ENCODE measurements at regions of chr19 and their contacts with region 1.

Region 1: GRCh38 chr19:47186446-47187334 is 44.3 kb downstream of the BBC3 start:
- DNase-seq: peak; percentile 61 to 89 (median 81)
- ATAC-seq: peak; percentile 81 to 90 (median 86)
- H3K4me3 ChIP-seq: peak overlapping the region; percentile 8 to 18
- H3K4me3 Mint-ChIP-seq: peak overlapping the region; percentile 62 to 73 (median 72)
- H3K27ac ChIP-seq: peak overlapping the region; percentile 82
- H3K27ac Mint-ChIP-seq: peak overlapping the region; percentile 97 to 98
- H3K4me1 ChIP-seq: peaks cover 78 to 92% of the 10 kb centered on the region in 2 experiments
- H3K4me1 Mint-ChIP-seq: peaks cover 87 to 89% (median 88%) of the 10 kb centered on the region in 3 donors
- H3K27me3 ChIP-seq: no peaks in the 10 kb centered on the region
- H3K27me3 Mint-ChIP-seq: no peaks in the 10 kb centered on the region

Region 2: GRCh38 chr19:47124937-47125668 is 61.6 kb before region 1 on chr19:
- CTCF ChIA-PET with region 1: no interaction called
- POLR2A ChIA-PET with region 1: no interaction called
- DNase-seq: peak in 7 of 35 experiments; percentile 7 to 82 (median 23)
- ATAC-seq: peak; percentile 50 to 71 (median 63)
- H3K4me3 ChIP-seq: no peak overlapping the region
- H3K4me3 Mint-ChIP-seq: no peak overlapping the region
- H3K27ac ChIP-seq: no peak overlapping the region
- H3K27ac Mint-ChIP-seq: peak overlapping the region in 1 of 2 donors; percentile 29
- H3K4me1 ChIP-seq: peaks cover 0 to 3% of the 10 kb centered on the region in 2 experiments
- H3K4me1 Mint-ChIP-seq: peaks cover under 1 to 8% (median 6%) of the 10 kb centered on the region in 3 donors
- H3K27me3 ChIP-seq: no peaks in the 10 kb centered on the region
- H3K27me3 Mint-ChIP-seq: peaks cover 0 to 2% of the 10 kb centered on the region in 2 donors

Region 3: DNA sequence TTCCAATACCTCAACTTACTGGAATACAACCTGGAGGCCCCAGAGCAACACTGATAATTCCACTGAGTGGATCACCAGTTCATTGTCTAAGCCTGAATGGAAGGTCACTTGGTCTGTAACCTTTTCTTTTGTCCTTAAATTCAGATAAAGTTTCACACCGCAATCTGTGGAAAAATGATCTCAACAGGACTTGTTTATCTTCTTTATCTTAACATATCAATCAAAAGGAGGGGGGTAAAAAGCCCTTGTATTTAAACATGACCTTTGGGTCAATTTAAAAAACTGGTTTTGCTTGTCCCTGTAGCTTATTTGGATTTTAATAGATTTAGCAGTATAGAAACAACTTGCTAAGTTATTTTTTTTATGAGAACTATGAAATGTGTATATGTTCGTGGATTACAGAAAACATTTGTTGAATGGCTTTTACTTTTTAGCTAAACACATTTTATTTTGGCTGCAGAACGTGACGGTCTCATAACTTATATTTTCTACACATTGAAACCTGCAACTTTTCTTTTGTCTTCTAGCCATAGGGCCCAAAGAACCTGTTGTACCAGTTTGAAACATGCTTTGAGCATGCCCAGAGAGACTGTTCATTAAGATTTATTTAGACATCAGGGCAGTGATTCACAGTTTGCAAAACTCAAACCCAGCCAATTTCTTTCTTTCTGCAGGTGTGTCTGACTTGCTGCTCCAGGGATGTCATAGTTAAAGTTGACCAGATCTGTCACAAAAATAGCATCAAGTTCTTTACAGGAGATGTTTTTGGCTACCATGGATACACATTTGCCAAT is 34.3 kb before region 1 on chr19:
- CTCF ChIA-PET with region 1: interaction called, 5 to 32 read pairs
- POLR2A ChIA-PET with region 1: interaction called in 1 of 2 experiments, 7 read pairs
- DNase-seq: no peak
- ATAC-seq: no peak
- H3K4me3 ChIP-seq: no peak overlapping the region
- H3K4me3 Mint-ChIP-seq: no peak overlapping the region
- H3K27ac ChIP-seq: no peak overlapping the region
- H3K27ac Mint-ChIP-seq: peak overlapping the region in 1 of 2 donors; percentile 32
- H3K4me1 ChIP-seq: peaks cover 34 to 53% of the 10 kb centered on the region in 2 experiments
- H3K4me1 Mint-ChIP-seq: peaks cover 50 to 58% (median 56%) of the 10 kb centered on the region in 3 donors
- H3K27me3 ChIP-seq: no peaks in the 10 kb centered on the region
- H3K27me3 Mint-ChIP-seq: no peaks in the 10 kb centered on the region

Region 4: GRCh38 chr19:47157431-47158321 is 29.0 kb before region 1 on chr19:
- CTCF ChIA-PET with region 1: interaction called in 1 of 2 experiments, 32 read pairs
- POLR2A ChIA-PET with region 1: interaction called in 1 of 2 experiments, 7 read pairs
- DNase-seq: peak in 33 of 35 experiments; percentile 9 to 72 (median 39)
- ATAC-seq: peak; percentile 32 to 50 (median 38)
- H3K4me3 ChIP-seq: peak overlapping the region; percentile 6 to 29
- H3K4me3 Mint-ChIP-seq: peak overlapping the region; percentile 29 to 80 (median 61)
- H3K27ac ChIP-seq: peak overlapping the region; percentile 68
- H3K27ac Mint-ChIP-seq: peak overlapping the region; percentile 92 to 94
- H3K4me1 ChIP-seq: peaks cover 59 to 76% of the 10 kb centered on the region in 2 experiments
- H3K4me1 Mint-ChIP-seq: peaks cover 66 to 74% (median 68%) of the 10 kb centered on the region in 3 donors
- H3K27me3 ChIP-seq: no peaks in the 10 kb centered on the region
- H3K27me3 Mint-ChIP-seq: no peaks in the 10 kb centered on the region

Region 5: DNA sequence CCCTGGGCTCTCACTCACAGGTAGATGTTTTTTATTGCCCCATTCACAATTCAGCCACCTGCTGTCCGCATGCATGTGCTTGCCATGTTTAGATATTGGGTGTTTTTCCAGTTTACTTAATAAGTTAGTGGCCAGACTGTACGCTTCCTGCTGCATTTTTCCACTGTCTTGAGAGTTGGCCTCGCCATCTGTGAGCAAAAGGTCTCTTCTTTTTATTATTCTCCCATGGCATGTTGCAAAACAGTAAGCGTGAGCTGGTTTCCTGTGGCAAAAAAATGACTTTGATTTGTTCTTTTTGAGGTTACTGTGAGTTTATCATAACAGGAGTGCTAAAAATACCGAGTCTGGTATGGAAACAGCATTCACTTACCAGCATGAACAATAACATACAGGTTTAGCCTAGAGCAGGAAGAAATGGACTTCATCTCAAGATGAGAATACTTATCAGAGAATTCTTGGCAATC is 10.0 kb before region 1 on chr19:
- CTCF ChIA-PET with region 1: interaction called in 1 of 2 experiments, 14 read pairs
- POLR2A ChIA-PET with region 1: no interaction called
- DNase-seq: peak in 23 of 35 experiments; percentile 5 to 73 (median 29)
- ATAC-seq: peak; percentile 87 to 96 (median 92)
- H3K4me3 ChIP-seq: peak overlapping the region in 1 of 2 donors; percentile 23
- H3K4me3 Mint-ChIP-seq: peak overlapping the region; percentile 65 to 73 (median 65)
- H3K27ac ChIP-seq: peak overlapping the region; percentile 66
- H3K27ac Mint-ChIP-seq: peak overlapping the region; percentile 98 to 99
- H3K4me1 ChIP-seq: peaks cover 48 to 53% of the 10 kb centered on the region in 2 experiments
- H3K4me1 Mint-ChIP-seq: peaks cover 64 to 70% (median 66%) of the 10 kb centered on the region in 3 donors
- H3K27me3 ChIP-seq: no peaks in the 10 kb centered on the region
- H3K27me3 Mint-ChIP-seq: no peaks in the 10 kb centered on the region

Region 6: DNA sequence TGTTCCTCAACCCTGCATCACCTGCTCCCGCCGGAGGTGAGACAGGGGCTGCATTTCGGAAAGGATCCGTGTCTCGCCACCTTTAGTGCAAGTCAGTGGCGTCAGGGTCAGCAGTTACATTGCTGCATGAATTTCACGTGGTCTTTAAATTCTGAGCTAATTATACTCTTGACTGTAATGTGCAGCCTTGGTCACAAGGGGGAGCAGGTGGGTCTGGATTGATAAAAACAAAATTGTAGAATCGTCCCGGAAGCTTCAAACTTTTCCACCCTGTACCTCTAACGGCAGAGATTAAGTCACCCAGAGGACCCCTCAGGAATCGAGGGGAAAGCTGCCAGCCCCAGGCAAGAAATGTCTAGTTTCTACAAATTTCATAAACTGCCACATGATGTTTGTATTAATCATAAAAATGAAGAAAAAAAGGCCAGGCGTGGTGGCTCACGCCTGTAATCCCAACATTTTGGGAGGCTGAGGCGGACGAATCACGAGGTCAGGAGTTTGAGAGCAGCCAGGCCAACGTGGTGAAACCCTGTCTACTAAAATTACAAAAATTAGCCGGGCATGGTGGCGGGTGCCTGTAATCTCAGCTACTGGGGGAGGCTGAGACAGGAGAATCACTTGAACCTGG is 24.1 kb after region 1 on chr19:
- CTCF ChIA-PET with region 1: interaction called in 1 of 2 experiments, 11 read pairs
- POLR2A ChIA-PET with region 1: no interaction called
- DNase-seq: peak; percentile 49 to 89 (median 72)
- ATAC-seq: peak; percentile 67 to 91 (median 80)
- H3K4me3 ChIP-seq: no peak overlapping the region
- H3K4me3 Mint-ChIP-seq: no peak overlapping the region
- H3K27ac ChIP-seq: no peak overlapping the region
- H3K27ac Mint-ChIP-seq: peak overlapping the region; percentile 71 to 80
- H3K4me1 ChIP-seq: peaks cover 0 to 10% of the 10 kb centered on the region in 2 experiments
- H3K4me1 Mint-ChIP-seq: peaks cover 9 to 11% (median 11%) of the 10 kb centered on the region in 3 donors
- H3K27me3 ChIP-seq: no peaks in the 10 kb centered on the region
- H3K27me3 Mint-ChIP-seq: no peaks in the 10 kb centered on the region

Measured in T-cell (primary cell).